ENCODE measurements at regions of chr4 and their contacts with region 1.

Region 1: DNA sequence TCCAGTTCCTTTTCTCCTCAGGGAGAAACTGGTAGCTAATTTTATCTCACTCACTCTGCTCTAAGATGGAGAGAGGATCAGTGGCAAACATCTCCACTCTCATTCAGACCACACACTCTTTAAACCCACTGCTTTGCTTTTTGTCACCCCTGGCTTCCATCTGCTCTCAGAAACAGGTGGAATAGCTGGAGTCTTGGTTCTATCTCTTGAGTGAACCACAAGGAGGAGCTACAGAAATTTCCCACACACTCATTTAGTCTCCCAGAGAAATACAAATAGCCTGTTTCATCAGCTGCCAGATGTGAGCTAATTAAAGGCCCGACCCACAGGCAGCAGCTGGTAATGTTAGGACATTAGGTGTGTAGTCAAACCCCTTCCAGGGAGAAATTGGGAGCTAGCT is 96.6 kb downstream of the STPG2 start:
- DNase-seq: no peak
- ATAC-seq: peak; percentile 89
- H3K4me3 Mint-ChIP-seq: no peak overlapping the region
- H3K27ac Mint-ChIP-seq: no peak overlapping the region
- H3K4me1 Mint-ChIP-seq: peaks cover 8% of the 10 kb centered on the region
- H3K27me3 Mint-ChIP-seq: no peaks in the 10 kb centered on the region
- CTCF ChIP-seq: no peak

Region 2: DNA sequence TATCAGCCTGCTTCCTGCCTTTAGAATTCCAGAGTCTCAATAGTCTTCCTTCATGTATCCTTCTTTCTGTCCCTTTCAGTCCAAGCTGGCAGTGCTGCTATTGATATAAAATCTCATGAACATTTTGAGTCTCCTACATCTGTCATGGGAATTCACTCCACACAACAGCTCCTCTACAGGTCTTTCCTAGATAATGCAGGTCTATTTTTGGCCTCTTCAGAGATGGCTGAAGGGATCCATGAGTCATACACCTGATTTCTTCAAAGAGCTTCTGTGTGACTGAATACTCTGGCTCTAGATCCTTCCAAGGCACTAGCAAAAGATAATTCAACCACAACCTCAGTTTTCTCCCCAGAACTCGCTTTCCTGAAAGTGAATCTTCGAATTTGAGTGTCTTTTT is 18.8 kb before region 1 on chr4:
- CTCF ChIA-PET with region 1: interaction called, 28 read pairs
- POLR2A ChIA-PET with region 1: no interaction called
- DNase-seq: no peak
- ATAC-seq: peak; percentile 97
- H3K4me3 Mint-ChIP-seq: no peak overlapping the region
- H3K27ac Mint-ChIP-seq: no peak overlapping the region
- H3K4me1 Mint-ChIP-seq: no peaks in the 10 kb centered on the region
- H3K27me3 Mint-ChIP-seq: peaks cover 10% of the 10 kb centered on the region
- CTCF ChIP-seq: peak; percentile 33; the same call in 1 of the 2 replicates

Region 3: DNA sequence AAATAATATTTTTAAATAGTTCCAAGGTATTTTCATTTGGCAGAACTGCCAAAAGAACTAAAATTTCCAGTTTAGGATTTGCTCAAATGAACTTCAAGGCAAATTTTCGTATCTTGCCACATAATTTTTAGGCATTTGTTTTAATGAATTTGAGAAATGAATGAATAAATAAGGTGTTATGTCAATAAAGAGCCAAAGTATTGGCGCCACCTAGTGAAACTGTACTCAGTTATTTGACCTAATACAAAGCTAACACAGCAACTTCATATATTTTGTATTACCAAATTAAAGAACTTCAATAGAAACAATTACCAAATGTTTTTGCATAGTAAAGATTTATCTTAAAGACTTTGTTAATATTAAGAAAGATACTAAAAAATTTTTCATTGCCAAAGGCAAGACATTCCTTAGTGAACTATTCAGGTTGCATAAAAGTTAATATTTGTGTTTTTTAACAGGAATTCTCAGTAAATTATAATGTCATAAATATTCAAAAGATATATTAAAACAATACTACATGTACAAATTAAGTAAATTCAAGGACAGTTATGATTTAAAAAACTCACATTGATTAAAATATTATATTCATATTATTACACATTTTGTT is 46.3 kb after region 1 on chr4:
- CTCF ChIA-PET with region 1: interaction called, 13 read pairs
- POLR2A ChIA-PET with region 1: no interaction called
- DNase-seq: no peak
- ATAC-seq: no peak
- H3K4me3 Mint-ChIP-seq: no peak overlapping the region
- H3K27ac Mint-ChIP-seq: no peak overlapping the region
- H3K4me1 Mint-ChIP-seq: no peaks in the 10 kb centered on the region
- H3K27me3 Mint-ChIP-seq: no peaks in the 10 kb centered on the region
- CTCF ChIP-seq: 0 out of 2 replicates have a peak, but pooled peaks have one; percentile 22

Region 4: GRCh38 chr4:98143001-98143899 is 96.6 kb after region 1 on chr4 and contains the start of gene STPG2:
- CTCF ChIA-PET with region 1: interaction called, 26 read pairs
- POLR2A ChIA-PET with region 1: no interaction called
- DNase-seq: peak; percentile 95
- ATAC-seq: peak; percentile 97
- H3K4me3 Mint-ChIP-seq: peak within 1 kb of the TSS; percentile 92
- H3K27ac Mint-ChIP-seq: peak within 1 kb of the TSS; percentile 98
- H3K4me1 Mint-ChIP-seq: peaks cover 22% of the 10 kb centered on the region
- H3K27me3 Mint-ChIP-seq: no peaks in the 10 kb centered on the region
- CTCF ChIP-seq: peak; percentile 52
- total RNA-seq, gene STPG2: 0.17 to 0.39 TPM (median 0.18 TPM) in 3 replicates

Measured in WTC11 (cell line).